ENCODE measurements at regions of chr16 and their contacts with region 1.

Region 1: DNA sequence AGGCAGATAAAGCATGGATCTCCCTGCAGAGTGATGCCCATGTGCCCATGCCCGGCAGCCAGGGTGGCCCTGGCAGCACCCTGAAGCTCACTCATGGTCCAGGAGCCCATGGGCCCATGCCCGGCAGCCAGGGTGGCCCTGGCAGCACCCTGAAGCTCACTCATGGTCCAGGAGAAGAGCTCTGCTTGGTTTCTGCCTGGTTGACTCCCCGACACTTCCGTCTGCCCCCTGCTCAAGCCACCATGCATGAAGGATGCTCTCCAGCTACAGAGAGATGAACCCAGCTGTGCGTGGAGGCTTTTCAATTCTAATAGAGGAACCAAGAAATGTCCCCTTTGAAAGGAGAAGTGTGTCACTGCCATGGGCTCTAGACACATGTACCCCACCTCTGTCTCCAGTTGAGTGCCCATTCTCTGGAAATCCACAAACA is 8.7 kb downstream of the CCL17 start:
- DNase-seq: peak; percentile 52
- ATAC-seq: peak; percentile 72
- H3K4me3 ChIP-seq: no peak overlapping the region
- H3K27ac ChIP-seq: peak overlapping the region; percentile 42; the same call in 1 of the 2 replicates
- H3K4me1 ChIP-seq: peaks cover 51% of the 10 kb centered on the region
- H3K27me3 ChIP-seq: no peaks in the 10 kb centered on the region
- CTCF ChIP-seq: no peak
- EP300 ChIP-seq: no peak
- POLR2A ChIP-seq: no peak
- RAD21 ChIP-seq: no peak

Region 2: DNA sequence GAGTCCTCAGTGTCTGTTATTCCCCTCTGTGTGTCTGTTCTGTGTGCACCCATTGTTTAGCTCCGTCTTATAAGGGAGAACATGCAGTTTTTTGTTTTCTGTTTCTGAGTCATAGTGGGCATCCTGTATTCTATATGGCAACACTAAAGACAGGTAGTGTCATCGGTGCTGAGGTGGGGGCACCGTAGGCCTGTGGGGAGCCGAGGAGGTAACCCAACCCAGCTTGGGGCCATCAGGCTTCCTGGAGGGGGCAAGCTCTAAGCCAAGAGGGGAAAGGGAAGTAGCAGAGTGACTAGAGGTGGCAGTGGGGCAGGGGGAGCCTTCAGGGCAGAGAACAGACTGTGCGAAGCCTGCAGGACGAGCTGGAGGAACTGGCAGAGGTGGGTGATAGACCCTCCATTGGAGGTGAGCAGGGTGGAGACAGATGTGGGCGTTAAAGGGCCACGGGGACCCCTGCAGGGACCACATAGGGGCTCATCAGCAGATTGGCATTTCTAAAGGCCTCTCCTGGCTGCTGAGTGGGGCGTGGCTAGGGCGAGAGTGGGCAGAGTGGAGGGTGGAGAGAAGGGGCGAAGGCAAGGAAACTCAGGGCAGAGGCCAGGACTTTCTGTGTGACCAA is 284.4 kb before region 1 on chr16:
- CTCF ChIA-PET with region 1: no interaction called
- POLR2A ChIA-PET with region 1: no interaction called
- RAD21 ChIA-PET with region 1: no interaction called
- SMC1A ChIA-PET with region 1: no interaction called
- in situ Hi-C with region 1: no loop called
- intact Hi-C with region 1: no loop called
- DNase-seq: peak; percentile 28
- ATAC-seq: peak; percentile 75
- H3K4me3 ChIP-seq: no peak overlapping the region
- H3K27ac ChIP-seq: no peak overlapping the region
- H3K4me1 ChIP-seq: peaks cover 31% of the 10 kb centered on the region
- H3K27me3 ChIP-seq: no peaks in the 10 kb centered on the region
- CTCF ChIP-seq: no peak
- EP300 ChIP-seq: no peak
- POLR2A ChIP-seq: no peak
- RAD21 ChIP-seq: no peak

Region 3: DNA sequence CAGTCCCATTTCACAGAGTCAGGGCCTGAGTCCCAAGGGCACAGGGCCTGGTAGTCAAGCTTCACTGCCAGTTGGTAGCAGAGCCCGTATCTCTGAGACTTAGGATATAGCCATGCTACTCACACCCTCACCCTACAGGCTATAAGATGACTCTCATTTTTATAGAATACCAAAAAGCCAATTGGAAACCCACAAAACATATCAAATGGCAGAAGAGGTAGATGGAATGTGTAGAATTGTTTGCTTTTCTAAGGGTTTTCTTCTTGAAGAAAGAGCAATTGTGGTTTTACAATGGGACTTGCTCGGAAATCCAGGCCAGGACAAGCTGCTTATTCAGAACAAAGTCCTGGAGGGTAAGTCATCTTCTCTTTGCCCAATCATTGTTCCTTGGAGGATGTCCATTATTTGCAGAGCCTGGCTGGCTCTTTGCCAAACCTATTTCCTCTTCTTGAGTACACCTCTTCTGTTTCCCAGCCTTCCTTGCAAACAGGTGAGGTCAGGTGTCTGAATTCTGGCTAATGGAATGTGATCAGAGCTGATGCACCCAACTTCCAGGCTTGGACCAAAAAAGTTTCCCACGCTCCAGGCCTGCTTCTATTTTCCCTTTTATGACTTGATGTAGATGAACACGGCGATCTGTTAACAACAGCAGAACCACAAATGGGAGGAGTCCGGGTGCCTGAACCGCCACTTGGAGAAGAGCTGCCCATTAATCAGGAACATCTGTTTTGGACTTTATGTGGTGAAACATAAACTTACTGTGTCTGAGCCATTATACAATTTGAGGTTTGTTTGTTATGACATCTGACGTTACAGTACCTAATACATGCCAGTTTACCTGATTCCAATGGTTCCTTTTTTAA is 71.6 kb before region 1 on chr16:
- CTCF ChIA-PET with region 1: interaction called, 95 read pairs
- POLR2A ChIA-PET with region 1: interaction called, 5 read pairs
- RAD21 ChIA-PET with region 1: interaction called, 50 read pairs
- SMC1A ChIA-PET with region 1: interaction called, 32 read pairs
- in situ Hi-C with region 1: no loop called
- intact Hi-C with region 1: loop called (anchors 2 kb)
- DNase-seq: no peak
- ATAC-seq: peak; percentile 43
- H3K4me3 ChIP-seq: no peak overlapping the region
- H3K27ac ChIP-seq: peak overlapping the region; percentile 38
- H3K4me1 ChIP-seq: peaks cover 44% of the 10 kb centered on the region
- H3K27me3 ChIP-seq: no peaks in the 10 kb centered on the region
- CTCF ChIP-seq: no peak
- EP300 ChIP-seq: no peak
- POLR2A ChIP-seq: no peak
- RAD21 ChIP-seq: 0 out of 2 replicates have a peak, but pooled peaks have one; percentile 1

Region 4: DNA sequence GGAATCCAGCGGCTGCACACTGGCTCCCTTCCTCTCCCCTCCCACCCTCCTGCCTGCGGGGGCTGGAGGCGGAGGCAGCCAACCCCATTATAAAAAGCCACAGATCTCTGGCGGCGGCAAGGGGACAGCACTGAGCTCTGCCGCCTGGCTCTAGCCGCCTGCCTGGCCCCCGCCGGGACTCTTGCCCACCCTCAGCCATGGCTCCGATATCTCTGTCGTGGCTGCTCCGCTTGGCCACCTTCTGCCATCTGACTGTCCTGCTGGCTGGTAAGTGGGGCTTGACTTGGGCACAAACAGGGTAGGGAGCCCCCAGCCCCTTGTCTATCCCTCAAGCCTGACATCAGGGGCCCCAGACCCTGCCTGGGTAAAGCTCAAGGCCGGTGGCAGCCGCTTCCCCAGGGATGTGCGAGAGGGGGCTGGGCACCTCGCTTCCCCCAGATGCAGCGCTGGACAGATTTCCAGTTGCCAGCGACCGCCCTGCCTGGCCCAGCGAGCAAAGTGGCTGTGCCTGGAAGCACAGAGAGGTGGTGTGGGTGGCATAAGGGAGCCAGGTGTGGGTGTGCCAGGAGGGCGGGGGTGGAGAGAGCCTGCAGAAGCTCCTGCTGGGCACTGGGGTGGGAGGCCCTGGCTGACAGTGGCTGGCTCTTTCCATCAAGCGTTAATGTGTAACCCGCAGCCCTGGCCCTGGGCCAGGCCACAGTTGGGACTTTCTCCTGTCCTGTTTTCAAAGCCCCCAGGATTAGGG is 40.8 kb before region 1 on chr16 and contains the start of gene CX3CL1:
- CTCF ChIA-PET with region 1: interaction called, 30 read pairs
- POLR2A ChIA-PET with region 1: interaction called, 7 read pairs
- RAD21 ChIA-PET with region 1: interaction called, 41 read pairs
- SMC1A ChIA-PET with region 1: interaction called, 23 read pairs
- in situ Hi-C with region 1: no loop called
- intact Hi-C with region 1: loop called (anchors 1 kb)
- DNase-seq: no peak
- ATAC-seq: peak; percentile 16
- H3K4me3 ChIP-seq: no peak within 1 kb of the TSS
- H3K27ac ChIP-seq: no peak within 1 kb of the TSS
- H3K4me1 ChIP-seq: peaks cover 14% of the 10 kb centered on the region
- H3K27me3 ChIP-seq: no peaks in the 10 kb centered on the region
- CTCF ChIP-seq: no peak
- EP300 ChIP-seq: 0 out of 4 replicates have a peak, but pooled peaks of 1 of the 2 experiments have one; percentile 22
- POLR2A ChIP-seq: no peak
- RAD21 ChIP-seq: no peak
- polyA plus RNA-seq, gene CX3CL1: 0.03 to 0.05 TPM

Region 5: DNA sequence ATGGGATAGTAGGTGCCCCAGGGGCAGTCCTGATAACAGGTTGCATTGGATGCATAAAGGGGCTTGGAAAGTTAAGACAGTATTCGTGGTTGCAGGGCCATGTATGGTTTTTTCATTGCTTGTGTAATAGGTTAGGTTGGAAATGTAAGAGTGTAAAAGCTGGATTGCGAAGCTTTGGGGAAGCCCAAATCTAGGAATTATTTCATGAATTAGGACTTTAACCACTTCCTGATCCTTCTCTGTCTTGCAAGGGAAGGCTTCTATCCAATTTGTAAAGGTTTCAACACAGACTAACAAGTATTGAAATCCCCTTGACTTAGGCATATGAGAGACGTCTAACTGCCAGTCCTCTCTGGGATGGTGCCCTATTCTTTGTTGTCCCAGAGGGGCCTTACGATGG is 16.5 kb before region 1 on chr16:
- CTCF ChIA-PET with region 1: interaction called, 7 read pairs
- POLR2A ChIA-PET with region 1: interaction called, 9 read pairs
- RAD21 ChIA-PET with region 1: interaction called, 14 read pairs
- SMC1A ChIA-PET with region 1: interaction called, 20 read pairs
- in situ Hi-C with region 1: no loop called
- intact Hi-C with region 1: no loop called
- DNase-seq: no peak
- ATAC-seq: no peak
- H3K4me3 ChIP-seq: no peak overlapping the region
- H3K27ac ChIP-seq: no peak overlapping the region
- H3K4me1 ChIP-seq: peaks cover 4% of the 10 kb centered on the region
- H3K27me3 ChIP-seq: no peaks in the 10 kb centered on the region
- CTCF ChIP-seq: no peak
- EP300 ChIP-seq: no peak
- POLR2A ChIP-seq: no peak
- RAD21 ChIP-seq: no peak

Region 6: DNA sequence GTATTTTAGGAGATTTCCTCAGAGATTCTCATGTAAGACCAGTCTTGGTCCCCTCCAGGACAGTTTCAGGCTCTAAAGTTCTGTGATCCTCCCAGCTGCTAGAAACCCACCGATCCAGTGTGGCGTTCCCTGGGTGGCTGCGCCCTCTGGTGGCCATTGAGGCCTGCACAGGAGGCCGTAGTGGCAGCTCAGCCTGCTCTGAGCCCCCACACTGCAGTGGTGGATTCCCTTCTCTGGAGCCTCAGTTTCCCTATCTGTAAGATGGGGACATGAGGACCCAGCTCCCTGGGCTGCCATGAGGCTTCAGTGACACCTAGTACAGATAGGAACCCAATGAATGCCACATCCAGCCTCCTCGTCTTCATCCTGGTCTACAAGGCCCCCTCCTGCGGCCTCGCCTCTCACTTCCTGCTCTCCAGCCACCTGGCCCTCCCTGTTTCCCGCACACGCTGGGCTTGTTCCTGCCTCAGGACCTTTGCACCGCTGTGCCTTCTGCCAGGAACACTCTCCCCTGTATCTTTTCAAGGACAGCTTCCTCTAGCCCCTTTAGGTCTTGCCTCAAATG is 106.6 kb after region 1 on chr16:
- CTCF ChIA-PET with region 1: interaction called, 174 read pairs
- POLR2A ChIA-PET with region 1: interaction called, 3 read pairs
- RAD21 ChIA-PET with region 1: interaction called, 49 read pairs
- SMC1A ChIA-PET with region 1: interaction called, 51 read pairs
- in situ Hi-C with region 1: loop called (anchors 5 kb)
- intact Hi-C with region 1: no loop called
- DNase-seq: no peak
- ATAC-seq: peak; percentile 96
- H3K4me3 ChIP-seq: no peak overlapping the region
- H3K27ac ChIP-seq: no peak overlapping the region
- H3K4me1 ChIP-seq: peaks cover 12% of the 10 kb centered on the region
- H3K27me3 ChIP-seq: no peaks in the 10 kb centered on the region
- CTCF ChIP-seq: peak; percentile 91 to 99 (median 98); a peak in 5 of 6 replicates
- EP300 ChIP-seq: no peak
- POLR2A ChIP-seq: no peak
- RAD21 ChIP-seq: peak; percentile 96

Measured in GM12878 (cell line).